ENCODE measurements at regions of chr12 and their contacts with region 1.

Region 1: GRCh38 chr12:91687052-91688017 is 458.3 kb downstream of the BTG1 start:
- DNase-seq: peak in 4 of 9 experiments; percentile 27 to 80 (median 64)
- ATAC-seq: peak; percentile 89
- H3K4me3 ChIP-seq: no peak overlapping the region
- H3K4me3 Mint-ChIP-seq: peak overlapping the region; percentile 13
- H3K27ac ChIP-seq: no peak overlapping the region
- H3K27ac Mint-ChIP-seq: peak overlapping the region; percentile 60
- H3K4me1 ChIP-seq: peaks cover 23% of the 10 kb centered on the region
- H3K4me1 Mint-ChIP-seq: peaks cover 20% of the 10 kb centered on the region
- H3K27me3 ChIP-seq: no peaks in the 10 kb centered on the region
- H3K27me3 Mint-ChIP-seq: no peaks in the 10 kb centered on the region
- CTCF ChIP-seq: no peak

Region 2: GRCh38 chr12:91588874-91589454 is 98.4 kb before region 1 on chr12:
- CTCF ChIA-PET with region 1: no interaction called
- POLR2A ChIA-PET with region 1: no interaction called
- intact Hi-C with region 1: loop called in 1 of 2 experiments (anchors 5 kb)
- DNase-seq: no peak
- ATAC-seq: no peak
- H3K4me3 ChIP-seq: no peak overlapping the region
- H3K4me3 Mint-ChIP-seq: no peak overlapping the region
- H3K27ac ChIP-seq: no peak overlapping the region
- H3K27ac Mint-ChIP-seq: no peak overlapping the region
- H3K4me1 ChIP-seq: peaks cover 7% of the 10 kb centered on the region
- H3K4me1 Mint-ChIP-seq: peaks cover 12% of the 10 kb centered on the region
- H3K27me3 ChIP-seq: no peaks in the 10 kb centered on the region
- H3K27me3 Mint-ChIP-seq: no peaks in the 10 kb centered on the region
- CTCF ChIP-seq: no peak

Region 3: DNA sequence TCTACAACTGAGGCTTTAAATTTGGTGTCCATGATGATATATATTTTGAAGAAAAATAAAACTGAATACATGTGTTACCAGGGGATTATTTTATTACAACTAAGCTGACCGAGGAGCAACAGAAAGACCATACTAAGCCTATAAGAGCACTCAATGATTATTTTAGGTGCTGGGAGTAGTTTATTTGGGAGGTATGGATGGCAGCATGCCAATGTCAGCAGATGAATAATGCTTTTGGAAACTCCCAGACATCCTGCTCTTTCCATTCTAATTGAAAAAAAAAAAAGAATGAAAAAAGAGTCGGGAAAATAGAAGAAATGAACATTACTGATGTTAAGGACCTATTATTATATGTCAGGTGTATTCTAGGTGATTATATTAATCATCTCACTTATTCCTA is 17.1 kb after region 1 on chr12:
- CTCF ChIA-PET with region 1: no interaction called
- POLR2A ChIA-PET with region 1: no interaction called
- intact Hi-C with region 1: no loop called
- DNase-seq: no peak
- ATAC-seq: no peak
- H3K4me3 ChIP-seq: no peak overlapping the region
- H3K4me3 Mint-ChIP-seq: no peak overlapping the region
- H3K27ac ChIP-seq: no peak overlapping the region
- H3K27ac Mint-ChIP-seq: no peak overlapping the region
- H3K4me1 ChIP-seq: no peaks in the 10 kb centered on the region
- H3K4me1 Mint-ChIP-seq: no peaks in the 10 kb centered on the region
- H3K27me3 ChIP-seq: no peaks in the 10 kb centered on the region
- H3K27me3 Mint-ChIP-seq: no peaks in the 10 kb centered on the region
- CTCF ChIP-seq: no peak

Region 4: DNA sequence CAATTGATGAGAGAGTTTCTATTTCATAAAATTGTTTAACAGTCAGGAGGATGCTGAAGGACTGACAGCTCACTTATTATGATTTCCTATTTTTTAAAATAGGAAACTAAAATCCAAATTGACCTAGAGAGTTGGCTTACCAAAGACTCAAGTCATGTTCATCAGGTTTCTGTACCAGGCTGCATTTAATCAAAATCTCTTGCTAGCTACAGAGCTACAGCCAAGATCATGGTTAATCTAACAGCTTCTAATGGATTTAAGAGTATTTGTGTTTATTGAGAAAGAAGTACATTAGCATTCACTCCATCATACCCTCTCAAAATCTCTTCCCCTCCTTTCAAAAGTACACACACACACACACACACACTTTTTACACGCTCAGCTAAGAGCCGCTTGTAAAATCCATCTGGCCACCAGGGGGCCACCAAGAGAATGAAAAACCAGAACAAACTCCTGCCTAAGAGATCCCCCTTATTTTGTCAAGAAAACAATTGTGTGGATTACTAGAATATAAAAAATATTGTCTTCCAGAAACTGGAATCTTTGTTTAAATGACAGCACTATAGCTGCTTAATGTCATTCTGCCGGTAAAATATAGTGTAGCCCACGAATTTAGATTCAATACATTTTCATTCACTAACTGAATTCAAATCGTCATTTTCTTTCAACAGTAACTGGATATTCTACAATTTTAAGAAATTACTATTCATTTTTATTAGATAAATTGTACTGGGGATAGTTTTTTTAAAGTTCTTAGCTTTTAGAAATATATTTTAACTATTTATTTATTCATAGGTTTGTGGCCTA is 124.3 kb after region 1 on chr12:
- CTCF ChIA-PET with region 1: no interaction called
- POLR2A ChIA-PET with region 1: no interaction called
- intact Hi-C with region 1: no loop called
- DNase-seq: peak; percentile 69 to 87 (median 81)
- ATAC-seq: peak; percentile 89
- H3K4me3 ChIP-seq: no peak overlapping the region
- H3K4me3 Mint-ChIP-seq: no peak overlapping the region
- H3K27ac ChIP-seq: no peak overlapping the region
- H3K27ac Mint-ChIP-seq: peak overlapping the region; percentile 89
- H3K4me1 ChIP-seq: peaks cover 5% of the 10 kb centered on the region
- H3K4me1 Mint-ChIP-seq: peaks cover 30% of the 10 kb centered on the region
- H3K27me3 ChIP-seq: no peaks in the 10 kb centered on the region
- H3K27me3 Mint-ChIP-seq: no peaks in the 10 kb centered on the region
- CTCF ChIP-seq: peak; percentile 84

Region 5: DNA sequence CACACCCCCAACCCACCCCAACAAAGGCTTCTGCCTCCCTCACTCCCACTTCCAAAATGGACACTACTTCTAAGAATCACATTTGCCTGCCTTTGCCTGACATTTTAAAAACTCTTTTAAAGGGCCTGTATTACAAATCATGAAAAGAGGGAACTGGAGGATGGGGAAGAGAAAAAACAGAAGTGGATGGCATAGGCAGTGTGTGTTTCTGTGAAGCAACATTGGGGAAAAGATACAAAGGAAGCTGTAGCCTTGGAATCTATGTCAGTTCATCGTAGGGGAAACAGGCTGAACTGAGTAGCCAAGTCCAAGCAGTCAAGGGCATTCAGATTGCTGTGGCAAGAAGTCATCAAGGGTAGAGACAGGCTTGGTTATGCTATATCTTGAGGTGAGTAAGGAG is 184.4 kb after region 1 on chr12:
- CTCF ChIA-PET with region 1: no interaction called
- POLR2A ChIA-PET with region 1: no interaction called
- intact Hi-C with region 1: loop called (anchors 5 kb)
- DNase-seq: no peak
- ATAC-seq: no peak
- H3K4me3 ChIP-seq: no peak overlapping the region
- H3K4me3 Mint-ChIP-seq: peak overlapping the region; percentile 41
- H3K27ac ChIP-seq: peak overlapping the region in 1 of 2 experiments; percentile 23
- H3K27ac Mint-ChIP-seq: peak overlapping the region; percentile 94
- H3K4me1 ChIP-seq: peaks cover 64% of the 10 kb centered on the region
- H3K4me1 Mint-ChIP-seq: peaks cover 63% of the 10 kb centered on the region
- H3K27me3 ChIP-seq: no peaks in the 10 kb centered on the region
- H3K27me3 Mint-ChIP-seq: no peaks in the 10 kb centered on the region
- CTCF ChIP-seq: no peak

Region 6: DNA sequence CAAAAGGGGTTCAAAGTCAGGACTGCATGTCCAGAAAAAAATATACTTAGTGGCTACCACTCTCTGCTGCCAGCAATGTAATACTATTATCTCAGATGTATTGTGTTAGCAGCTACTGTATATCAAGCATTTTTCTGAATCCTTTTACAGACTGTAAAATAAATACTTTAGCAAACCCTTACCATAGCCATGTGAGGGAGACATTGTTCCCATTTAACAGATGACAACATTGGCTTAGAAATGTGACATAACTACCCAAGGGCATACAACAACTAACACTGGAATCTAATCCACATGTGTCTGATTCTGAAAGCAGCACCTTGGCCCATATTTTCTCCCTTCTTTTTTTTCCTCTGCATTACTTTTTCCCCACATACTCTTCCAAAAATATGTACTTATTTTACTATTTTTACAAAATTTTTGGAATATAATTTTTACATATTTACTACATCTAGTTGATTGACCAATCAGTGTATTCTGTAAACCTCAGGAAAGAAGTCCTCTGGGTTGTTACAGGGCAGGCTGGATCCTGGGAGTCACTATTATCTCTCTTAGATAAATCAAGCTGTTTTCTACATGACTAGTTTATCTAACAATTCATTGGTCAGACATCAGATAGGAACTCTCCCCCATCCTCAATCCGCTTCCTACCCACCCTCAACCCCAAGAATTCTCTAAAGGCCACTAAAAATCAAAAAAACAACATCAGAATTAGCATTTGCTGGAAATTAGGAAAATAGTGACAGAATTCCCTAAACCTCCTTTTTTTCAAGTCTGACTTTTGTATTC is 304.3 kb after region 1 on chr12:
- CTCF ChIA-PET with region 1: no interaction called
- POLR2A ChIA-PET with region 1: no interaction called
- intact Hi-C with region 1: no loop called
- DNase-seq: peak in 2 of 9 experiments; percentile 61 to 77
- ATAC-seq: peak; percentile 71
- H3K4me3 ChIP-seq: no peak overlapping the region
- H3K4me3 Mint-ChIP-seq: no peak overlapping the region
- H3K27ac ChIP-seq: no peak overlapping the region
- H3K27ac Mint-ChIP-seq: peak overlapping the region; percentile 66
- H3K4me1 ChIP-seq: peaks cover 25% of the 10 kb centered on the region
- H3K4me1 Mint-ChIP-seq: peaks cover 65% of the 10 kb centered on the region
- H3K27me3 ChIP-seq: no peaks in the 10 kb centered on the region
- H3K27me3 Mint-ChIP-seq: no peaks in the 10 kb centered on the region
- CTCF ChIP-seq: peak; percentile 28

Measured in CD8-positive, alpha-beta T cell (primary cell).